ENCODE measurements at regions of chr20 and their contacts with region 1.

Region 1: GRCh38 chr20:38446441-38447209 is 11.5 kb upstream of the SNHG17 start:
- DNase-seq: peak; percentile 88 to 91 (median 89)
- H3K4me3 ChIP-seq: peak overlapping the region; percentile 61 to 99 (median 86)
- H3K4me3 Mint-ChIP-seq: peak overlapping the region; percentile 79 to 84
- H3K27ac ChIP-seq: peak overlapping the region; percentile 74 to 88
- H3K27ac Mint-ChIP-seq: peak overlapping the region; percentile 60 to 87 (median 67)
- H3K4me1 ChIP-seq: peaks cover 24 to 26% of the 10 kb centered on the region in 2 donors
- H3K4me1 Mint-ChIP-seq: peaks cover 22% of the 10 kb centered on the region
- H3K27me3 ChIP-seq: peaks cover 0 to 4% of the 10 kb centered on the region in 2 donors
- H3K27me3 Mint-ChIP-seq: peaks cover 5 to 11% (median 9%) of the 10 kb centered on the region in 3 donors
- CTCF ChIP-seq: peak; percentile 99

Region 2: GRCh38 chr20:38033310-38034107 is 413.1 kb before region 1 on chr20 and contains the starts of genes RPRD1B and TTI1:
- intact Hi-C with region 1: loop called in 1 of 2 experiments (anchors 5 kb)
- DNase-seq: peak; percentile 82 to 90 (median 86)
- H3K4me3 ChIP-seq: peak within 1 kb of the TSS; percentile 64 to 93 (median 85)
- H3K4me3 Mint-ChIP-seq: peak within 1 kb of the TSS; percentile 94 to 95
- H3K27ac ChIP-seq: peak within 1 kb of the TSS; percentile 79 to 99
- H3K27ac Mint-ChIP-seq: peak within 1 kb of the TSS; percentile 95 to 100 (median 100)
- H3K4me1 ChIP-seq: peaks cover 30 to 41% of the 10 kb centered on the region in 2 donors
- H3K4me1 Mint-ChIP-seq: peaks cover 55% of the 10 kb centered on the region
- H3K27me3 ChIP-seq: no peaks in the 10 kb centered on the region
- H3K27me3 Mint-ChIP-seq: peaks cover 0 to 1% (median 0%) of the 10 kb centered on the region in 3 donors
- CTCF ChIP-seq: no peak
- polyA plus RNA-seq, gene RPRD1B: 3.6 to 12.3 (median 4.7) TPM
- polyA plus RNA-seq, gene TTI1: 6.4 to 9.1 (median 8.8) TPM

Region 3: GRCh38 chr20:38460040-38460623 is 13.5 kb after region 1 on chr20:
- intact Hi-C with region 1: no loop called
- DNase-seq: peak in 1 of 3 donors; percentile 35
- H3K4me3 ChIP-seq: no peak overlapping the region
- H3K4me3 Mint-ChIP-seq: no peak overlapping the region
- H3K27ac ChIP-seq: no peak overlapping the region
- H3K27ac Mint-ChIP-seq: peak overlapping the region in 1 of 7 donors; percentile 53
- H3K4me1 ChIP-seq: no peaks in the 10 kb centered on the region
- H3K4me1 Mint-ChIP-seq: peaks cover 5% of the 10 kb centered on the region
- H3K27me3 ChIP-seq: no peaks in the 10 kb centered on the region
- H3K27me3 Mint-ChIP-seq: peaks cover 2 to 8% (median 5%) of the 10 kb centered on the region in 3 donors
- CTCF ChIP-seq: no peak

Region 4: DNA sequence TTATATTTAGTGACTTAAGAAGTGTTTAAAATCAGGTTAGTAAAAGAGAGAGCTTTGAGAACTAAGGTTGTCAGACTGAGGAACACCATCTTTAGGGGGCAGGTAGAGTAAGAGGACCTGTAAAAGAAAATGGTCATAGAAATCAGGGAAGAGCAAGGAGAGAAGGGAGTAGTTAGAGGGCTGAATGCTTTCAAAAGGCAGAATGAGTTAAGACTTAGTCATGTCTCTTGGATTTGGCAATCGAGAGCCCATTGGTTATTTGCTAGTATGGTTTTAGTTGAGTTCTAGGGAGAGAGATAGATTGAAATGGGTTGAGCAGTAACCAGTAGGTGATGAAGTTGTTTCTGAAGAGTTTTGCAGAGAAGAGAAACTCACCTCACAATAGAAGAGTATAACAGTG is 77.1 kb after region 1 on chr20:
- intact Hi-C with region 1: no loop called
- DNase-seq: no peak
- H3K4me3 ChIP-seq: no peak overlapping the region
- H3K4me3 Mint-ChIP-seq: no peak overlapping the region
- H3K27ac ChIP-seq: no peak overlapping the region
- H3K27ac Mint-ChIP-seq: no peak overlapping the region
- H3K4me1 ChIP-seq: no peaks in the 10 kb centered on the region
- H3K4me1 Mint-ChIP-seq: peaks cover 1% of the 10 kb centered on the region
- H3K27me3 ChIP-seq: no peaks in the 10 kb centered on the region
- H3K27me3 Mint-ChIP-seq: no peaks in the 10 kb centered on the region
- CTCF ChIP-seq: no peak

Measured in CD14-positive monocyte (primary cell).